GM18951 (cell line): ENCODE measurements at regions of chr3 and their contacts with region 1.

Region 1: DNA sequence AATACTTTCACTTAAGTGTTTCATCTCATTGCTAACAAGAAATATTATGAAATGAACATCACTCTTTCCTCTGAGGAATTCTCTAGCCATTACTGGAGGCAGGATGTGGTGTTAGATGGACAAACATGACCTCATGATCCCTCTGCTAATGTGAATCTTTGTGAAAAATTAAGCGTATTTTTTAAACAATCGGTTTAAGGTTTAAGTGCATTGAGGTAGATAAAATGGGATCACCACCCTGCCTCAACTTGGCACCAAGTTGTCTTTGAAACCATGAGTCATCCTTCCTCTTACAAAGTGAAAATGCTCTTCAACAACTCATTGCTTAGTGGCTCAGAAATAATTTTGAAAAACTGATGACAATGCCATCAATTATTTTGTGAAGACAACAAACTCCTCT is 76.0 kb upstream of the DCBLD2 start:
- POLR2A ChIP-seq: no peak

Region 2: DNA sequence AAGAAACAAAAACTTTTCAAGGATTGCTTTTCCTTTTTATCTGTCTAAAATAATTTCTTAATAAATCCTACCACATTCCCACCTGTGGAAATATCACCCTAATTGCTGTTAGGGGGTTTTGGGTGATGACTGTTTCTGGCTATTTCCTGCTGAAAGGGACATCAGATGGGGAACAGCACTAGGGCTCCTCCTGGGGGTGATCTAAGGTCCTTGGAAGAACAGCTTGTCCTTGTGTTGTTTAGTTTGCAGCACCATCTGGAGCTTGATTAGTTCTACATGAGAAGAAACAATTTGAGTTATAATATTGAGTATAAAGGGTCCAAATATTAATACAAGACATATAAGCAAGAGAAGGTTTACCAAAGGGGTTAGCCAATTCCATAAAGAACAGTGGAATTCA is 792.3 kb before region 1 on chr3:
- in situ Hi-C with region 1: no loop called
- POLR2A ChIP-seq: no peak

Region 3: GRCh38 chr3:98824256-98824655 is 153.3 kb before region 1 on chr3:
- in situ Hi-C with region 1: loop called (anchors 10 kb)
- POLR2A ChIP-seq: no peak